Activated B cell treated with CpG ODN at 0.5 μM for 24 hours (primary cell): ENCODE measurements at regions of chr15 and their contacts with region 1.

Region 1: DNA sequence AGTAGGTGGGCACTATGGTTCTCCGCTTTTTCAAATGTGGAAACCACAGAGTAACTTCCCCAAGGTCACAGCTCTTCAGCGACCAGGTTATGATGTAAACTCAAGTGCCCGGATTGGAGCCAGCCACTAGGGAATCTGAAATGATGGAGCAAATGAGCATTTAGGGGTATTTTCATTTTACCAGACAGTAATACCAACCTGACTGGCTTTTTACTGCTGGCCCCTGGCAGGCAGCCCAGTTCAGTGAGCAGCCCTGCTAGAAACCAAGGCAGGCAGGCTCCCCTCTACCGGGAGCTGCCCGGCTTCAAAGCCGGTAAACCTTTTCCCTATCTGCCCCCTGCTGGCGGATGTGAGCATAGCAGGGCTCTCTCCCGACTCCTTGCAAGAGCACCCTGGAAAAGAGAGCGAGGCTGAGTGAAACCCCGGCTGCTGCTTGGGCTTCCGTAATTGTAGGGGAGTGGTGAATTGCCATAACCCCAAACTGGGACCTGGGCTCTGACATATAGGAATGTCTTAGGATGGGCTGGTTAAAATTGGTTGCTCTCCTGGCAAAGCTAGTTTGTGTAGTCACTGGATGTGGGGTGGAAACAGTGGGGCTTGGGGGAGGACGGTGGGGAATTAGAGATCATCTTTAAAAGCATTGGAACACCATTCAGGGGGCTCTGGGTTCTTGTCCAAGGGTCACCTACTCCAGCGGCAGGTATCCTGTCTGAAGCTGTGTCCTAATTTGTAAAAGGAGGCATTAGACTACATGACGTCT is 98.0 kb upstream of the TNFAIP8L3 start:
- DNase-seq: peak; percentile 57
- ATAC-seq: peak; percentile 49
- H3K4me3 Mint-ChIP-seq: no peak overlapping the region
- H3K27ac Mint-ChIP-seq: no peak overlapping the region
- H3K4me1 Mint-ChIP-seq: no peaks in the 10 kb centered on the region
- H3K27me3 Mint-ChIP-seq: peaks cover 37% of the 10 kb centered on the region
- CTCF ChIP-seq: peak; percentile 78

Region 2: GRCh38 chr15:51181905-51182304 is 10.8 kb before region 1 on chr15:
- CTCF ChIA-PET with region 1: interaction called, 11 read pairs
- POLR2A ChIA-PET with region 1: no interaction called
- intact Hi-C with region 1: no loop called
- DNase-seq: no peak
- ATAC-seq: no peak
- H3K4me3 Mint-ChIP-seq: no peak overlapping the region
- H3K27ac Mint-ChIP-seq: no peak overlapping the region
- H3K4me1 Mint-ChIP-seq: no peaks in the 10 kb centered on the region
- H3K27me3 Mint-ChIP-seq: peaks cover 15% of the 10 kb centered on the region
- CTCF ChIP-seq: no peak

Region 3: GRCh38 chr15:51205071-51205959 is 12.6 kb after region 1 on chr15:
- CTCF ChIA-PET with region 1: interaction called, 11 read pairs
- POLR2A ChIA-PET with region 1: no interaction called
- intact Hi-C with region 1: no loop called
- DNase-seq: no peak
- ATAC-seq: no peak
- H3K4me3 Mint-ChIP-seq: no peak overlapping the region
- H3K27ac Mint-ChIP-seq: no peak overlapping the region
- H3K4me1 Mint-ChIP-seq: no peaks in the 10 kb centered on the region
- H3K27me3 Mint-ChIP-seq: peaks cover 15% of the 10 kb centered on the region
- CTCF ChIP-seq: no peak